ENCODE measurements at regions of chr22 and their contacts with region 1.

Region 1: GRCh38 chr22:40939202-40939601 is 12.0 kb upstream of the RBX1 start:
- DNase-seq: no peak
- H3K4me3 Mint-ChIP-seq: no peak overlapping the region
- H3K27ac Mint-ChIP-seq: no peak overlapping the region
- H3K4me1 Mint-ChIP-seq: no peaks in the 10 kb centered on the region
- H3K27me3 Mint-ChIP-seq: no peaks in the 10 kb centered on the region

Region 2: GRCh38 chr22:40782518-40782917 is 156.7 kb before region 1 on chr22:
- CTCF ChIA-PET with region 1: no interaction called
- POLR2A ChIA-PET with region 1: interaction called, 17 read pairs
- DNase-seq: no peak
- H3K4me3 Mint-ChIP-seq: no peak overlapping the region
- H3K27ac Mint-ChIP-seq: no peak overlapping the region
- H3K4me1 Mint-ChIP-seq: no peaks in the 10 kb centered on the region
- H3K27me3 Mint-ChIP-seq: no peaks in the 10 kb centered on the region

Region 3: DNA sequence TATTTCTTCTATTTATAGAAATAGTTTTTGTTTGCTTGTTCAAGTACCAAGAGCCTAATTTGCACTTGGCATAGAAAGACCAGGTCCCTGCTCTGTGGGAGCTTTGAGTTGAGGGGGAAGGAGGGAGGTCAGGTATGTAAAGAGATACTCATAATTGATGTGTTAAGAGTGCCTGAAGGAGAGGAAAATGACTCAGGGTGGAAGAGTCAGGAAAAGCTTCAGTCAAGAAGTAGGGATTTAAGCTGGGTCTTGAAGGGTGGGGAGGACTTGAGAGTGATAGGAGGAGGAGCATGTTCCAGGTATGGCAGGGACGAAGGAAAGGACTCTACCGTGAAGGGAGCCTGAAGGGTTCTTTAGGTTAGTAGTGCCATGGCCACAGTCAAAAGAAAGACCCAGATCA is 20.9 kb after region 1 on chr22:
- CTCF ChIA-PET with region 1: no interaction called
- POLR2A ChIA-PET with region 1: no interaction called
- DNase-seq: no peak
- H3K4me3 Mint-ChIP-seq: no peak overlapping the region
- H3K27ac Mint-ChIP-seq: peak overlapping the region; percentile 39
- H3K4me1 Mint-ChIP-seq: peaks cover 16% of the 10 kb centered on the region
- H3K27me3 Mint-ChIP-seq: no peaks in the 10 kb centered on the region

Region 4: DNA sequence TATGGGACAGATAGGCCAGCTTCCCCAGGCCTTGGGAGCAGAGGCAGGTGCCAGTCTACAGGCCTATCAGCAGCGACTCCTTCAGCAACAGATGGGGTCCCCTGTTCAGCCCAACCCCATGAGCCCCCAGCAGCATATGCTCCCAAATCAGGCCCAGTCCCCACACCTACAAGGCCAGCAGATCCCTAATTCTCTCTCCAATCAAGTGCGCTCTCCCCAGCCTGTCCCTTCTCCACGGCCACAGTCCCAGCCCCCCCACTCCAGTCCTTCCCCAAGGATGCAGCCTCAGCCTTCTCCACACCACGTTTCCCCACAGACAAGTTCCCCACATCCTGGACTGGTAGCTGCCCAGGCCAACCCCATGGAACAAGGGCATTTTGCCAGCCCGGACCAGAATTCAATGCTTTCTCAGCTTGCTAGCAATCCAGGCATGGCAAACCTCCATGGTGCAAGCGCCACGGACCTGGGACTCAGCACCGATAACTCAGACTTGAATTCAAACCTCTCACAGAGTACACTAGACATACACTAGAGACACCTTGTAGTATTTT is 239.3 kb after region 1 on chr22:
- CTCF ChIA-PET with region 1: no interaction called
- POLR2A ChIA-PET with region 1: no interaction called
- DNase-seq: no peak
- H3K4me3 Mint-ChIP-seq: no peak overlapping the region
- H3K27ac Mint-ChIP-seq: no peak overlapping the region
- H3K4me1 Mint-ChIP-seq: peaks cover 14% of the 10 kb centered on the region
- H3K27me3 Mint-ChIP-seq: no peaks in the 10 kb centered on the region

Measured in activated CD4-positive, alpha-beta T cell treated with anti-CD3 and anti-CD28 coated beads, Interleukin-2, amount 10 ng/mL, durations not matched to agents 7 days and 5 days (primary cell).